ENCODE measurements at regions of chrX and their contacts with region 1.

Region 1: GRCh38 chrX:17242470-17242869 is 132.5 kb upstream of the NHS start:
- DNase-seq: peak; percentile 30 to 37
- H3K4me3 ChIP-seq: no peak overlapping the region
- H3K4me3 Mint-ChIP-seq: no peak overlapping the region
- H3K27ac Mint-ChIP-seq: no peak overlapping the region
- H3K4me1 ChIP-seq: no peaks in the 10 kb centered on the region
- H3K4me1 Mint-ChIP-seq: no peaks in the 10 kb centered on the region
- H3K27me3 ChIP-seq: no peaks in the 10 kb centered on the region
- H3K27me3 Mint-ChIP-seq: no peaks in the 10 kb centered on the region
- CTCF ChIP-seq: peak; percentile 55 to 67

Region 2: DNA sequence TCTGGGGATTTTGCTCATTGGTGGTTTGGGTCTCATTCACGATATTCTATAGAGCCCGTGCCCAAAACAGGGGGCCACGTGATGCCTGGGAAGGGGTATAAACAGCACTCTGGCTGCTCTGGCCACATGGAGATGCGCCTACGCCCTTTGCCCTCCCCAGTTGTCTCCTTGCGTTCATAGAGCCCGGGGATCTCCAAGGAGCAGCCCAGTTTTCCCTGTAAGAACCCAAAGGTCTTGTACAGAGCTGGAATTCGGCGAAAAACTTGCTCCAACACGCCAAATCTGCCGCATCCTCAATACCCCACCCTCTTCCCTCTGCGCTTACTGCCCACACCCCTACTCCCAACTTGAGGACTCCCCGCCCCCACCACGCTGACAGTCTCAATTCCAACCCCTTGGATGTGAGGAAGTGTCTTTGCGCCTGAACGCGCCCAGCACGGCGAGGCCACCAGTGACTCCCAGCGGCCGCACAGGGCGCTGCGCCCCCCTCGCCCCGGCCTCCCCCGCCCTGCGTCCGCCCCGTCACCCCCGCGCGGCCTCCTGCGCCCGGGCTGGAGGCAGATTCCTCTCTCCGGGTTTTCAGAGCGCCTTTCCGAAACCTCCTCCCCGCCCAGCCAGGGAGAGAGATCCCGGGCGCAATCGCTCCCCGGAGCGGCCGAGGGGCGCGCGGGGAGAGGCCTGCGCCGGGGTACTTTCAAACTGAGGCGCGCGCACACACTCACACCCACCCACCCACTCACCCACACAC is 132.3 kb after region 1 on chrX and contains the start of gene NHS:
- CTCF ChIA-PET with region 1: no interaction called
- POLR2A ChIA-PET with region 1: no interaction called
- intact Hi-C with region 1: loop called (anchors 5 kb)
- DNase-seq: peak; percentile 59 to 67
- H3K4me3 ChIP-seq: peak within 1 kb of the TSS; percentile 42
- H3K4me3 Mint-ChIP-seq: peak within 1 kb of the TSS; percentile 77
- H3K27ac Mint-ChIP-seq: peak within 1 kb of the TSS; percentile 35
- H3K4me1 ChIP-seq: no peaks in the 10 kb centered on the region
- H3K4me1 Mint-ChIP-seq: no peaks in the 10 kb centered on the region
- H3K27me3 ChIP-seq: no peaks in the 10 kb centered on the region; the same call in 1 of the 2 replicates
- H3K27me3 Mint-ChIP-seq: peaks cover 6% of the 10 kb centered on the region
- CTCF ChIP-seq: peak; percentile 35 to 43
- total RNA-seq, gene NHS: 2.2 and 2.5 TPM in 2 replicates

Region 3: DNA sequence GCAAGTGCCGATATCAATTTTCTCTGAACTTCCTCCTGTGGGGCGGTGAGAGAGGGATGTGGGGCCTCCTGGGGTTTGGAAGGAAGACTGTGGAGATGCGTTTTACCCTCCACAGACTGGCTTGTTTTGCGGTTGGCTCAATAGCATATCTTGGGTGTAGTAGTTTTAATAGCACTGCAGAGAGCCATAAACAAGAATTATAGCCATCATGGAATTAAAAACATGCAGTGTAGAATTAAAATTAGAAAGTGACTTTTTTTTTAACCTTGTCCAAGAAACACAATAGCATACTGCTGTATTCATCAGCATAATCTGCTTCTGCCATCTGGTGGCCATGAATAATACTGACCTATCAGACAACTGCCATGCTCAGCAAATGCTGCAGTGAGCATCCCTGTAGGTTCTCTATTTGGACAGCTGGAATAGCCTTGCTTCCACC is 447.5 kb after region 1 on chrX:
- CTCF ChIA-PET with region 1: interaction called, 3 read pairs
- POLR2A ChIA-PET with region 1: no interaction called
- intact Hi-C with region 1: loop called (anchors 1 kb)
- DNase-seq: peak; percentile 42 to 49
- H3K4me3 ChIP-seq: no peak overlapping the region
- H3K4me3 Mint-ChIP-seq: no peak overlapping the region
- H3K27ac Mint-ChIP-seq: no peak overlapping the region
- H3K4me1 ChIP-seq: no peaks in the 10 kb centered on the region
- H3K4me1 Mint-ChIP-seq: no peaks in the 10 kb centered on the region
- H3K27me3 ChIP-seq: no peaks in the 10 kb centered on the region
- H3K27me3 Mint-ChIP-seq: no peaks in the 10 kb centered on the region
- CTCF ChIP-seq: peak; percentile 44 to 45

Measured in Caco-2 (cell line).